Calu3 (cell line): ENCODE measurements at regions of chr3 and their contacts with region 1.

Region 1: GRCh38 chr3:170414202-170414663 is 4.4 kb upstream of the CLDN11 start:
- DNase-seq: peak; percentile 55
- H3K4me3 Mint-ChIP-seq: no peak overlapping the region
- H3K27ac Mint-ChIP-seq: no peak overlapping the region
- H3K4me1 Mint-ChIP-seq: peaks cover 8% of the 10 kb centered on the region
- H3K27me3 Mint-ChIP-seq: no peaks in the 10 kb centered on the region
- CTCF ChIP-seq: peak; percentile 97

Region 2: GRCh38 chr3:169992161-169992560 is 422.1 kb before region 1 on chr3:
- CTCF ChIA-PET with region 1: no interaction called
- intact Hi-C with region 1: no loop called
- DNase-seq: no peak
- H3K4me3 Mint-ChIP-seq: no peak overlapping the region
- H3K27ac Mint-ChIP-seq: no peak overlapping the region
- H3K4me1 Mint-ChIP-seq: no peaks in the 10 kb centered on the region
- H3K27me3 Mint-ChIP-seq: no peaks in the 10 kb centered on the region
- CTCF ChIP-seq: no peak

Region 3: GRCh38 chr3:170189398-170190256 is 224.6 kb before region 1 on chr3:
- CTCF ChIA-PET with region 1: no interaction called
- intact Hi-C with region 1: loop called (anchors 2 kb)
- DNase-seq: no peak
- H3K4me3 Mint-ChIP-seq: no peak overlapping the region
- H3K27ac Mint-ChIP-seq: no peak overlapping the region
- H3K4me1 Mint-ChIP-seq: peaks cover 13% of the 10 kb centered on the region
- H3K27me3 Mint-ChIP-seq: no peaks in the 10 kb centered on the region
- CTCF ChIP-seq: no peak

Region 4: GRCh38 chr3:170499565-170500156 is 85.4 kb after region 1 on chr3:
- CTCF ChIA-PET with region 1: interaction called, 15 read pairs
- intact Hi-C with region 1: loop called (anchors 1 kb)
- DNase-seq: peak; percentile 65
- H3K4me3 Mint-ChIP-seq: no peak overlapping the region
- H3K27ac Mint-ChIP-seq: no peak overlapping the region
- H3K4me1 Mint-ChIP-seq: peaks cover 14% of the 10 kb centered on the region
- H3K27me3 Mint-ChIP-seq: peaks cover 8% of the 10 kb centered on the region
- CTCF ChIP-seq: peak; percentile 78

Region 5: DNA sequence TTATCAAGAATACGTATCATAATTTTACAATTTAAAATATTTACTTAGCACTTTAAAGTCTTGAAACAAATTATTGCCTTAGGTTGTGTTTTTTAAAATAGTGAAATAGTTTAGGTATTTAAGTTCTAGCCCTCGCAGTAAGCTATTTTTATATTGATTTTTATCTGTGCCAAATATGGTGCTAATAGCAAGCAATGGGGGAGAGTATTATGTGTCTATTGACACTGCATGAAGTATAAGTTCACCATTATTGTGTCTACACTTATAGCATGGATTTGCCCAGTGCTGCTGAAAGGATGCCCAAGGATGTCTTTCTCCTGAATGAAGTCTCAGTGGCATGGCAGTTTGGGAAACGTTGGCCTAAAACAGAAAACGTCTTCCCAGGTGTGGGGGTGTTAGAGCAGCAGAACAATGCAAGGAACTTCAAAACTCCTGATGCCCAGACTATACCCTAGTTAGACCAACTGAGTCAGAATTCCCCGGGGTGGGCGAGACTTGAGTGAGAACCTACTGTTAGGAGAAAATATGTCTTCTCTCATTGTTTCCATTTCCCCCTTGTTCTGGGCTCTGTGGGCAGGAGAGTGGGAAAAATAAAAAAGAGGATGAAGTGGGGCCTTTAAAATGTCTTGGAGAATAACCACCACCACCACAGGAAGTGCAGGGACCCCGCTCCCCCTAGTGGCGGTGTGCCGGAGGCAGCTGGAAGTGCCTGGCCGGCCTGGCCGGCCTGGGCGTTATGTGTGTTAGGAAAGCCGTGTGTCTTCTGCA is 275.8 kb after region 1 on chr3:
- CTCF ChIA-PET with region 1: interaction called, 35 read pairs
- intact Hi-C with region 1: loop called (anchors 1 kb)
- DNase-seq: peak; percentile 87
- H3K4me3 Mint-ChIP-seq: no peak overlapping the region
- H3K27ac Mint-ChIP-seq: no peak overlapping the region
- H3K4me1 Mint-ChIP-seq: no peaks in the 10 kb centered on the region
- H3K27me3 Mint-ChIP-seq: no peaks in the 10 kb centered on the region
- CTCF ChIP-seq: peak; percentile 86